MCF 10A (cell line): ENCODE measurements at regions of chr12 and their contacts with region 1.

Region 1: GRCh38 chr12:92649511-92650227 is 53.1 kb upstream of the PLEKHG7 start:
- DNase-seq: peak; percentile 88
- H3K4me3 Mint-ChIP-seq: peak overlapping the region; percentile 49
- H3K27ac Mint-ChIP-seq: no peak overlapping the region
- H3K4me1 Mint-ChIP-seq: peaks cover 17% of the 10 kb centered on the region
- H3K27me3 Mint-ChIP-seq: no peaks in the 10 kb centered on the region
- CTCF ChIP-seq: peak; percentile 67

Region 2: DNA sequence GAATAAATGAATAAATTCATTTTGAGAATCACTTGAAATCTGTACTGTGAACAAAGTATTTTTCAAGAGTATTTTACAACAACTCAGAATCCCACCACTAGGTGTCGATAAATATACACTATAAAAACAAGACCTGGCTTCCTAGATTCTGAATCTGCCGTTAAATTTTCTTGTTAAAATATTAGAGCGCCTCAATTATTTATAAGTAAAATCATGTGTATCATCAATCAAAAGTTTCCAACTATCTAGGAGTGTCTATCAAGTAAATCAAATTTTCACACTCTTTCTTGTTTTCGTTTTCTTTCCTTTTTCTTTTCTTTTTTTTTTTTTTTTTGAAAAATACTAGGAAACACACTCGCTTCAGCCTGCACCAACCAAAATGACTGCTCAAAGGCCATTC is 1287.8 kb before region 1 on chr12:
- CTCF ChIA-PET with region 1: interaction called, 6 read pairs
- POLR2A ChIA-PET with region 1: interaction called, 3 read pairs
- intact Hi-C with region 1: loop called (anchors 2 kb)
- DNase-seq: peak; percentile 47
- H3K4me3 Mint-ChIP-seq: no peak overlapping the region
- H3K27ac Mint-ChIP-seq: no peak overlapping the region
- H3K4me1 Mint-ChIP-seq: peaks cover 5% of the 10 kb centered on the region
- H3K27me3 Mint-ChIP-seq: peaks cover 11% of the 10 kb centered on the region
- CTCF ChIP-seq: peak; percentile 50

Region 3: GRCh38 chr12:91577586-91578539 is 1071.8 kb before region 1 on chr12:
- CTCF ChIA-PET with region 1: no interaction called
- POLR2A ChIA-PET with region 1: no interaction called
- intact Hi-C with region 1: loop called (anchors 10 kb)
- DNase-seq: peak; percentile 32
- H3K4me3 Mint-ChIP-seq: peak overlapping the region; percentile 57
- H3K27ac Mint-ChIP-seq: peak overlapping the region; percentile 85
- H3K4me1 Mint-ChIP-seq: peaks cover 20% of the 10 kb centered on the region
- H3K27me3 Mint-ChIP-seq: no peaks in the 10 kb centered on the region
- CTCF ChIP-seq: peak; percentile 52

Region 4: DNA sequence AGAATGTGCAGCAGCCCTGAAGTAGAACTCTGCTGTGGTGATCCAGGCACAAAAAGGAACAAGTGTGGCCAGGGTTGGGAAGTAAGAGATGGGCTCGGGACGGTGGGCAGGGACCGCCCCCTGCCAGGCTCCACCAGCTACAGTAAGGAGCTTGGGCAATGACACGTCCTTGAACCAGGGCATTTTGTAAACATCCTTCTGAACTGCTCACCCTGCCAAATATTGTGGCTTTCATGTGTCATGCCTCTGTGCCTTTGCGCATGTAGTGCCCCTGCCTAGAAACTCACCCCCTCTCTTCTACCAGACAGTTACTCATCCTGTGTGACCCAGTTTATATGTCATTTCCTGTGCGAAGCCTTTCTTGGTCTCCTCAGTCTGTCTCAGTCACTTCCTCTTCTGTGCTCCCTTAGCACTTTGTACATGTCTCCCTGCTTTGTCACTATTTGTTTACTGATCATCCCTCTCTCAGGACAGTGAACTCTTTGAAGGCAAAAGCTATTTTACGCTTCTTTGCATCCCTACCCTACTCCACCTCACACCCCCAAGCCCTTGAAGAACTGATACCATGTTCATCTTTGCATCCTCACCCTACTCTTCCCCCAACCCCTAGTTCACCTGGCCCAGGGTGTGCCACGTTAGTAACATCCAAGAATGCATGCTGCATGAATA is 55.8 kb before region 1 on chr12:
- CTCF ChIA-PET with region 1: interaction called, 11 read pairs
- POLR2A ChIA-PET with region 1: no interaction called
- intact Hi-C with region 1: no loop called
- DNase-seq: peak; percentile 79
- H3K4me3 Mint-ChIP-seq: peak overlapping the region; percentile 12
- H3K27ac Mint-ChIP-seq: peak overlapping the region; percentile 94
- H3K4me1 Mint-ChIP-seq: peaks cover 42% of the 10 kb centered on the region
- H3K27me3 Mint-ChIP-seq: no peaks in the 10 kb centered on the region
- CTCF ChIP-seq: no peak

Region 5: GRCh38 chr12:92608151-92609091 is 41.2 kb before region 1 on chr12:
- CTCF ChIA-PET with region 1: interaction called, 9 read pairs
- POLR2A ChIA-PET with region 1: interaction called, 3 read pairs
- intact Hi-C with region 1: loop called (anchors 1 kb)
- DNase-seq: peak; percentile 70
- H3K4me3 Mint-ChIP-seq: no peak overlapping the region
- H3K27ac Mint-ChIP-seq: no peak overlapping the region
- H3K4me1 Mint-ChIP-seq: peaks cover 11% of the 10 kb centered on the region
- H3K27me3 Mint-ChIP-seq: no peaks in the 10 kb centered on the region
- CTCF ChIP-seq: peak; percentile 47